H1 (cell line): ENCODE measurements at regions of chr11 and their contacts with region 1.

Region 1: DNA sequence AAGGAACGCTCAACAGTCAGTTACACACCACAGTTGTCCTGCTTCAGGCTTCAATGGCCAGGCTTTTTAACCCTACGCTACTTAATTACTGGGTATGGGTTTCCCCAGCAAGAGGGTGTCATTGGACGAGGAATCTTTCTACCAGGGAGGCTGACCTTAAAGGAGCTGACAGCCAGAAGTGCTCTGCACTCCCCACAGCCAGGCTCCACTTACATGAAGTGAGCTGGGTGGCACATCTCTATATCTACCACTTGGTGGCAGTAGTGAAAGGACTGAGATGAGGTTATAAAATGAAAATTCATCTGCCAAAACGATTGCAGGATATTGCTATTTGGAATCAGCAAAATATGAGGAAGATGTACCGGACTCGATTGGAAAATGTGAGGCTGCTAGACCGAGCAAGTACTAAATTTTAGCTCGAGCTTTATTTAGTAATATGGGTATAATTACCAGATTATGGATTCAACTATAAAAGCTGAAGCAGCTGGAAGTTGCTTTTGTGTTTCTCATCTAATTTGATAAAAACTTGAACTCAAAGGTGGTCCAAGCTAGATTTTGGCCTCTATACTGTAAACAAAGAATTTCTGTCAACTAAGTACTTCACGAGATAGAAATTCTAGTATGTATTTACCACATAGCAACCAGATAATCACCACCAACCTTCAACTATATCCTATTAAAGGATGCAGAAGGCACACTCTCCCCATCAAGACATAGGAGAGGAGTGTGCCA is 53.9 kb upstream of the CEP126 start:
- DNase-seq: peak in 1 of 2 experiments; percentile 29
- H3K4me3 ChIP-seq: no peak overlapping the region
- H3K27ac ChIP-seq: no peak overlapping the region
- H3K4me1 ChIP-seq: no peaks in the 10 kb centered on the region
- H3K27me3 ChIP-seq: no peaks in the 10 kb centered on the region
- CTCF ChIP-seq: peak; percentile 46 to 74 (median 69)
- EP300 ChIP-seq: no peak
- POLR2A ChIP-seq: no peak
- RAD21 ChIP-seq: peak; percentile 61 to 68

Region 2: GRCh38 chr11:101428918-101429317 is 431.9 kb before region 1 on chr11:
- CTCF ChIA-PET with region 1: interaction called, 46 read pairs
- POLR2A ChIA-PET with region 1: no interaction called
- DNase-seq: no peak
- H3K4me3 ChIP-seq: no peak overlapping the region
- H3K27ac ChIP-seq: no peak overlapping the region
- H3K4me1 ChIP-seq: peaks cover 0 to 7% (median 0%) of the 10 kb centered on the region in 4 experiments; a peak in 2 of 7 replicates
- H3K27me3 ChIP-seq: no peaks in the 10 kb centered on the region
- CTCF ChIP-seq: peak in 2 of 3 experiments; percentile 68 to 72; a peak in 3 of 4 replicates
- EP300 ChIP-seq: no peak
- POLR2A ChIP-seq: no peak
- RAD21 ChIP-seq: peak; percentile 92 to 93

Region 3: GRCh38 chr11:101456812-101457211 is 404.1 kb before region 1 on chr11:
- CTCF ChIA-PET with region 1: interaction called, 31 read pairs
- POLR2A ChIA-PET with region 1: no interaction called
- DNase-seq: no peak
- H3K4me3 ChIP-seq: no peak overlapping the region
- H3K27ac ChIP-seq: no peak overlapping the region
- H3K4me1 ChIP-seq: peaks cover 0 to 2% (median 0%) of the 10 kb centered on the region in 4 experiments; a peak in 1 of 7 replicates
- H3K27me3 ChIP-seq: no peaks in the 10 kb centered on the region
- CTCF ChIP-seq: no peak; a peak in 1 of 4 replicates
- EP300 ChIP-seq: no peak
- POLR2A ChIP-seq: no peak
- RAD21 ChIP-seq: peak in 1 of 2 experiments; percentile 38; a peak in 3 of 4 replicates

Region 4: GRCh38 chr11:101880222-101880621 is 19.4 kb after region 1 on chr11:
- CTCF ChIA-PET with region 1: interaction called, 87 read pairs
- POLR2A ChIA-PET with region 1: no interaction called
- DNase-seq: no peak
- H3K4me3 ChIP-seq: no peak overlapping the region
- H3K27ac ChIP-seq: no peak overlapping the region
- H3K4me1 ChIP-seq: no peaks in the 10 kb centered on the region
- H3K27me3 ChIP-seq: no peaks in the 10 kb centered on the region
- CTCF ChIP-seq: peak in 2 of 3 experiments; percentile 29 to 42; a peak in 2 of 4 replicates
- EP300 ChIP-seq: no peak
- POLR2A ChIP-seq: no peak
- RAD21 ChIP-seq: peak; percentile 29 to 31; a peak in 3 of 4 replicates

Region 5: DNA sequence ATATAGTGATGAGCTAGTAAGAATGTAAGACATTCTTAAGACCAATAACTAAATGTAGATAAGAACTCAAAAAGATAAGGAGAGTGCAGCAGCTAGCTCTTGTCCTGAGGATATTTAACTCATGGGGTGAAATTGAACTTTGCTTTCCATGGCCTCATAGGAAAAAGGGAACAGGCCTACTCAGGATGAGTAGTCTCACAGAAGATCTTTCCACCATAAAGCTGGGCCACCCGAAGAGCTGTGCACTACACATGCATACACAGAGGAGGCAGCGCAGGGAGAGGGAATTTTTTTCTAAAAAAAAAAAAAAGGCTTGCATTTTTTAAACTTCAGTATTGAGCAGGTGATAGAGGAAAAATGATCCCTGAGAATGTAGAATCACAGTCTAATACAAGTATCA is 126.5 kb after region 1 on chr11:
- CTCF ChIA-PET with region 1: interaction called, 17 read pairs
- POLR2A ChIA-PET with region 1: no interaction called
- DNase-seq: no peak
- H3K4me3 ChIP-seq: no peak overlapping the region
- H3K27ac ChIP-seq: no peak overlapping the region
- H3K4me1 ChIP-seq: no peaks in the 10 kb centered on the region
- H3K27me3 ChIP-seq: no peaks in the 10 kb centered on the region
- CTCF ChIP-seq: no peak
- EP300 ChIP-seq: no peak
- POLR2A ChIP-seq: no peak
- RAD21 ChIP-seq: no peak

Region 6: GRCh38 chr11:102014756-102015155 is 153.9 kb after region 1 on chr11:
- CTCF ChIA-PET with region 1: interaction called, 11 read pairs
- POLR2A ChIA-PET with region 1: no interaction called
- DNase-seq: no peak
- H3K4me3 ChIP-seq: no peak overlapping the region
- H3K27ac ChIP-seq: no peak overlapping the region
- H3K4me1 ChIP-seq: no peaks in the 10 kb centered on the region
- H3K27me3 ChIP-seq: no peaks in the 10 kb centered on the region
- CTCF ChIP-seq: no peak
- EP300 ChIP-seq: no peak
- POLR2A ChIP-seq: no peak
- RAD21 ChIP-seq: no peak